CD4-positive, alpha-beta T cell (primary cell): ENCODE measurements at regions of chr1 and their contacts with region 1.

Region 1: GRCh38 chr1:1115786-1116700 is at the start of gene C1orf159:
- DNase-seq: peak; percentile 96 to 99 (median 98)
- ATAC-seq: peak; percentile 93
- H3K4me3 ChIP-seq: peak within 1 kb of the TSS; percentile 49
- H3K4me3 Mint-ChIP-seq: peak within 1 kb of the TSS; percentile 97
- H3K27ac ChIP-seq: no peak within 1 kb of the TSS
- H3K27ac Mint-ChIP-seq: peak within 1 kb of the TSS; percentile 79
- H3K4me1 ChIP-seq: peaks cover 26% of the 10 kb centered on the region
- H3K4me1 Mint-ChIP-seq: peaks cover 13% of the 10 kb centered on the region
- H3K27me3 ChIP-seq: peaks cover 0 to 1% of the 10 kb centered on the region in 2 experiments
- H3K27me3 Mint-ChIP-seq: no peaks in the 10 kb centered on the region
- CTCF ChIP-seq: no peak
- total RNA-seq, gene C1orf159: 11.1 to 11.3 TPM

Region 2: DNA sequence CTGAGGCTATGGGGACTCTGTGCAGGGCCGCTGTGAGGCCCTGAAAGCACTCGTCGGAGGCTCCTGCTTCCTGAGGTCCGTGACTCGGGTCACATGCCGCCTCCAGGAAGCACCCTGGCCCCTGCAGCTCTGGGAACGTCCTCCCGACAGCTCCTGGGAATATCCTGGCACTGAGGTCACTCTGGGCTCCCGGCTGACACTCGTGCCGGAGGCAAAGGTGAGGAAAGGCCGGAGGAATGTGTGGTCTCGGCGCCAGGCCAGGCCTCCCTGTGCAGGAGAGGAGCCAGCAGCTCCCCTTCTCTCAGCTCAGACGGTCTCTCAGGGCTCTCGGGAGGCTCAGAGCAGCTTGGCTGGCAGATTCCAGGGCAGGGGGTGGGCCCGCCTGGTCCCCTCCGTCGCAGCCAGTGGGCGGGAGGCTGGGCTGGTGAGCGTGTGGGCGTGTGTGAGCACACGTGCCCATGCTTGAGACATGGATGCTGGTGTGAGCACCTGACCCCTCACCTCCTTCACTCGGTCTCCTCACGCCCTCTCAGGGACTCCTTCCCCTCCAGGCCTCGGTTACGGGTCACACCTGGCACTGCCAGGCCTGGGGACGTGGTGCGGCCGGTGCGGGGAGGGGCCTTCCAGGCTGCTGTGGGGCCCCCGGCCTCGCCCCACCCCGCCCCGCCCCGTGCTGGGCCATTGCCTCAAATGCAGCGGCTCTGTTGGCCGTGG is 36.5 kb before region 1 on chr1:
- CTCF ChIA-PET with region 1: no interaction called
- POLR2A ChIA-PET with region 1: no interaction called
- intact Hi-C with region 1: no loop called
- DNase-seq: peak in 6 of 14 experiments; percentile 14 to 65 (median 32)
- ATAC-seq: peak; percentile 78
- H3K4me3 ChIP-seq: peak overlapping the region; percentile 35
- H3K4me3 Mint-ChIP-seq: peak overlapping the region; percentile 20
- H3K27ac ChIP-seq: no peak overlapping the region
- H3K27ac Mint-ChIP-seq: no peak overlapping the region
- H3K4me1 ChIP-seq: peaks cover 14% of the 10 kb centered on the region
- H3K4me1 Mint-ChIP-seq: no peaks in the 10 kb centered on the region
- H3K27me3 ChIP-seq: peaks cover 13 to 14% of the 10 kb centered on the region in 2 experiments
- H3K27me3 Mint-ChIP-seq: peaks cover 3% of the 10 kb centered on the region
- CTCF ChIP-seq: no peak

Region 3: GRCh38 chr1:1173793-1174415 is 57.9 kb after region 1 on chr1 and contains the start of gene TTLL10:
- CTCF ChIA-PET with region 1: no interaction called
- POLR2A ChIA-PET with region 1: no interaction called
- intact Hi-C with region 1: no loop called
- DNase-seq: peak; percentile 18 to 83 (median 64)
- ATAC-seq: peak; percentile 78
- H3K4me3 ChIP-seq: peak within 1 kb of the TSS; percentile 30
- H3K4me3 Mint-ChIP-seq: no peak within 1 kb of the TSS
- H3K27ac ChIP-seq: no peak within 1 kb of the TSS
- H3K27ac Mint-ChIP-seq: no peak within 1 kb of the TSS
- H3K4me1 ChIP-seq: peaks cover 56% of the 10 kb centered on the region
- H3K4me1 Mint-ChIP-seq: peaks cover 4% of the 10 kb centered on the region
- H3K27me3 ChIP-seq: peaks cover 0 to 5% of the 10 kb centered on the region in 2 experiments
- H3K27me3 Mint-ChIP-seq: peaks cover 9% of the 10 kb centered on the region
- CTCF ChIP-seq: no peak
- total RNA-seq, gene TTLL10: 0.11 to 0.59 TPM

Region 4: DNA sequence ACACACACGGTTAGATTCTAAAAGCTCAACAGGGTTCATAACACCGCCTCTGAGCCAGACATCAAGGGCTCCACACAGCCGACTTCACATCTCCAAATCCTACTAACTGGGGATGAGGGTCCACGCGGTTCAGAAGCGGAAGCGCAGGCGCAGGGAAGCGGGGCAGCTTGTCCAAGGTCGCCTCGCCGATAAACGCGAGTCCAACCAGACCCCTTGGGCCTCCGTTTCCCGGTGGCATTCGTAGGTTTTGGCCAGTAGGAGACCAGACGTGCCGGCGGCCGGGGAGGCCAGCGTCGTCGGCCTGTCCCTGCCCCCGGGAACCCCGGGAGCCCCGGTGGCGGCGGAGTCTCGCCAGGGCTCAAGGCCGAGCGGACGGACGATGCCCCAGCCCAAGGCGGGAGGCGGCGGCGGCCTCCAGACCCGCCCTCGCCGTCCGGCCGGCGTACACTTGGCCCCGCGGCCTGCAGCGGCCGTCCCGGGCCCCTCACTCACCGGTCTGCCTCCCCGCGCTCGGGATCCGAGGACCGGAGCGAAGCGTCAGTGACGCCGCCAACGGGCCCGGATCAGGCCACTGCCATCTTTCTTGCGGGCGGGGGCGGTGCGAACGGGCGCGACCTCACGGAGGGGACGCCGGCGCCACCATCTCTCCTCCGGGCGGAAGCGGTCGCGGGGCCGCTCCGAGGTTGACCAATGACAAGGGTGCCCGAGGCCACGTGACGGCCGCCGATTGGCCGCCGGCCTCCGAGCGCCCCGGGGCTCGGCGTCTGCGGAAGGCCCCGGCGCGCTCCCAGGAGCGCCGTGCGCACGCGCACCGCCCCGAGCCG is 115.6 kb after region 1 on chr1 and contains the start of gene SDF4:
- CTCF ChIA-PET with region 1: no interaction called
- POLR2A ChIA-PET with region 1: interaction called, 3 read pairs
- intact Hi-C with region 1: loop called (anchors 1 to 2 kb)
- DNase-seq: peak; percentile 92 to 99 (median 96)
- ATAC-seq: peak; percentile 96
- H3K4me3 ChIP-seq: peak within 1 kb of the TSS; percentile 88
- H3K4me3 Mint-ChIP-seq: peak within 1 kb of the TSS; percentile 96
- H3K27ac ChIP-seq: peak within 1 kb of the TSS; percentile 44 to 87
- H3K27ac Mint-ChIP-seq: peak within 1 kb of the TSS; percentile 90
- H3K4me1 ChIP-seq: peaks cover 64% of the 10 kb centered on the region
- H3K4me1 Mint-ChIP-seq: peaks cover 23% of the 10 kb centered on the region
- H3K27me3 ChIP-seq: no peaks in the 10 kb centered on the region
- H3K27me3 Mint-ChIP-seq: no peaks in the 10 kb centered on the region
- CTCF ChIP-seq: no peak
- total RNA-seq, gene SDF4: 66.3 to 71.0 TPM

Region 5: DNA sequence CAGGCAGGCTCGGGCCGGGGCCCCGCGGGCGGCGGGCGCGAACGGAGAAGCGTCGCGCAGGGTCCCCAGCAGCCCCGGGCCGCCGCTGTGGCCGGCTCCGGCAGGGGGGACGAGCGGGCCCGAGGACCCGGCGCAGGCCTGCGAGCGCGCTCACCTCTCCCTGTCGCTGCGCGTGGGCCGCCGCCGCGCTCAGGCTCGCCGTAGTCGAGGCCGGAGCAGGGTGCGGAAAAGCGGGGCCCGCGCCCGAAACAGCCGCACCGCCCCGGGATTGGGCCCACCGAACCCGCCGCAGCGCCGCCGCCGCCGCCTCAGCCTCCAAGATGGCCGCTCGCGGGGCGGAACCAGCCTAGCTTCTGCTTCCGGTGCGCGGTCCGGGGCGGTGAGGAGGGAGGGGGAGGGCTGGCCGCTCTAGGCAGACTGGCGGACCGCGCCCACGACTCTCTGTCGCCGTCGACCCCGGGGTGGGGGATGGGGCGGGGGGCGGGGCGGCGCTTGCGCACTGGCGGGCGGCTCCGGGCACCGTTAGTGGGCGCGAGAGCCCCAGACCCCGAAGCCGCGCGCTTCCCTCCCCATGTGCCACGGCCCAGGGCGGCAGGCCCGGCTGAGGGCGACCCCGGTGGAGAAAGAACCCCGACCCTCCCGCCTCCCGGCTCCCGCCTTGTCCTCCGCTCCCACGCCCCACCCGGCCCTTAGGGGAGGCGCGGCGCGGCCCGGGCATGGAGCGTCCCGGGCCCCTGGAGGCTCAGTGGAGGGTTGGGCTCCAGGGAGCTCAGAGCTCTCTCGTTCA is 157.7 kb after region 1 on chr1 and contains the start of gene UBE2J2:
- CTCF ChIA-PET with region 1: no interaction called
- POLR2A ChIA-PET with region 1: no interaction called
- intact Hi-C with region 1: loop called in 1 of 2 experiments (anchors 1 kb)
- DNase-seq: peak; percentile 87 to 96 (median 92)
- ATAC-seq: peak; percentile 94
- H3K4me3 ChIP-seq: peak within 1 kb of the TSS; percentile 92
- H3K4me3 Mint-ChIP-seq: peak within 1 kb of the TSS; percentile 92
- H3K27ac ChIP-seq: peak within 1 kb of the TSS in 1 of 2 donors; percentile 29
- H3K27ac Mint-ChIP-seq: peak within 1 kb of the TSS; percentile 85
- H3K4me1 ChIP-seq: peaks cover 47% of the 10 kb centered on the region
- H3K4me1 Mint-ChIP-seq: peaks cover 34% of the 10 kb centered on the region
- H3K27me3 ChIP-seq: no peaks in the 10 kb centered on the region
- H3K27me3 Mint-ChIP-seq: no peaks in the 10 kb centered on the region
- CTCF ChIP-seq: no peak
- total RNA-seq, gene UBE2J2: 41.4 to 41.5 TPM

Region 6: GRCh38 chr1:1349256-1350012 is 233.4 kb after region 1 on chr1 and contains the start of gene DVL1:
- CTCF ChIA-PET with region 1: no interaction called
- POLR2A ChIA-PET with region 1: no interaction called
- intact Hi-C with region 1: loop called in 1 of 2 experiments (anchors 1 kb)
- DNase-seq: peak; percentile 58 to 90 (median 70)
- ATAC-seq: peak; percentile 75
- H3K4me3 ChIP-seq: peak within 1 kb of the TSS; percentile 58
- H3K4me3 Mint-ChIP-seq: peak within 1 kb of the TSS; percentile 86
- H3K27ac ChIP-seq: peak within 1 kb of the TSS in 1 of 2 donors; percentile 53
- H3K27ac Mint-ChIP-seq: no peak within 1 kb of the TSS
- H3K4me1 ChIP-seq: peaks cover 58% of the 10 kb centered on the region
- H3K4me1 Mint-ChIP-seq: peaks cover 36% of the 10 kb centered on the region
- H3K27me3 ChIP-seq: peaks cover 14 to 19% of the 10 kb centered on the region in 2 experiments
- H3K27me3 Mint-ChIP-seq: peaks cover 21% of the 10 kb centered on the region
- CTCF ChIP-seq: peak; percentile 27
- total RNA-seq, gene DVL1: 44.9 to 45.5 TPM